Head of caudate nucleus (tissue), 42 donors: ENCODE measurements at regions of chr11 and their contacts with region 1.

Region 1: GRCh38 chr11:131465746-131466145 is 95.3 kb downstream of the NTM start:
- DNase-seq: peak in 1 of 42 donors; percentile 60

Region 2: DNA sequence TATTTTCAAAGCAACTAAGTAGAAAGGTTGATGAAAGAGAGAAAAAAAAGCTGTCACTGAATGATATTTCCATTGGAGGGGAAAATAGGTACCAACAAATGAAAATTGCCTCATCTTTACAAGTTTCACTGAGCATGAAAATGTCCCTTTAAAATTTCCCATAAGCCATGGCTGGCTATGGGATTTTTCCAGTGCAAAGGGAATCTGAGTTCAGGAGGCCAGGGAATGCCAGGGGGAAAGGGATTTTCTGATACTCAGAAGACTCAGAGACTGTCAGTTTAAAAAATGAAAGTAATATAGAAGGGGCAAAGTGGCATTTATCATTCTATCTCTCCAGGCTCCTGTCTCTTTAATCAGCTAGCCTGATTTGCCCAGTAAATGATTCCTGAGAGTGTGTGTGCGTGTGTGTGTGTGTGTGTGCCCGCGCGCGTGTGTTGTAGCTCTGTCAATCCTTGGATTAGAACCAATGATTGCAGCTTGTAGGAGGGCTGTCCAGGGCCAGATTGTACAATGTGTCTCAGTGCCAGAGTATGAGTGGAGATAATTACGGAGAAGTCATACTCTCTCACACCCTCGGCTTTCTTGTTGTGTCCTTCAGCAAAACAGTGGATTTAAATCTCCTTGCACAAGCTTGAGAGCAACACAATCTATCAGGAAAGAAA is 95.5 kb before region 1 on chr11 and contains the start of gene NTM:
- intact Hi-C with region 1: loop called (anchors 10 kb)
- DNase-seq: peak; percentile 59 to 95 (median 82)

Region 3: DNA sequence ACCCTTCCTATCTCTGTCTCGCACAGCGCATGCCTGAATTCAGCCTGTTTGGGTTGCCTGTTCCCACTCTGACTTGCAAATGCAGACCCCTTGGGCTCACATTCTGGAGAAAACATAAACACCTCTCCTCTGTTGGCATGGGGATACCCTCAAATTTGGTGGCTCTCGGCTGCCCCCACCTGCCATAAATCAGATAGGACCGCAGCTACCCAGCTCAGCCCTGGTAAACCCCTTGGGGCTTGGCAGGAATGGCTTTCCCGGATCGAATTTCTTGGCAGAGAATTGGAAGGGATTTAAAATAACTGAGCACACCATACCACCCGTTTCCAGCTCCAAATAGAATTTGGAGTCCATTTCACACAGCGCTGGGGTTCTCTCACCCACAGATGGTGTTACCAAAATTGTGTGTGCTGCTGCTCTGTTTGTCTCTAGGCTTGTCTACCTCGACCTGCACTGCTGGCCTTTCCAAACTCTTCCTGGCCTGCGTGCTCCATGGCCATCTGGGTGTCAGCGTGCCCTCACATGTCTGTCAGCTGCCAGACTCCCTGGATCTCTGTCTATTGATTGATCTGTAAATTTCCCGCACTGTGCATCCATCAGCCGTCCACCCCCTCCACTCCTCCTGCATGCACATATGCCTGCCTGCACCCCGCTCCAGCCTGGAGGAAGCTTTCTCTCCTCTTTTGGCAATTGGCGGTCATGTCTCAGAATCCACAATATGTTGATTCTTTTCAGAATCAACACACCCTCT is 38.6 kb after region 1 on chr11:
- intact Hi-C with region 1: no loop called
- DNase-seq: peak; percentile 36 to 89 (median 74)

Region 4: DNA sequence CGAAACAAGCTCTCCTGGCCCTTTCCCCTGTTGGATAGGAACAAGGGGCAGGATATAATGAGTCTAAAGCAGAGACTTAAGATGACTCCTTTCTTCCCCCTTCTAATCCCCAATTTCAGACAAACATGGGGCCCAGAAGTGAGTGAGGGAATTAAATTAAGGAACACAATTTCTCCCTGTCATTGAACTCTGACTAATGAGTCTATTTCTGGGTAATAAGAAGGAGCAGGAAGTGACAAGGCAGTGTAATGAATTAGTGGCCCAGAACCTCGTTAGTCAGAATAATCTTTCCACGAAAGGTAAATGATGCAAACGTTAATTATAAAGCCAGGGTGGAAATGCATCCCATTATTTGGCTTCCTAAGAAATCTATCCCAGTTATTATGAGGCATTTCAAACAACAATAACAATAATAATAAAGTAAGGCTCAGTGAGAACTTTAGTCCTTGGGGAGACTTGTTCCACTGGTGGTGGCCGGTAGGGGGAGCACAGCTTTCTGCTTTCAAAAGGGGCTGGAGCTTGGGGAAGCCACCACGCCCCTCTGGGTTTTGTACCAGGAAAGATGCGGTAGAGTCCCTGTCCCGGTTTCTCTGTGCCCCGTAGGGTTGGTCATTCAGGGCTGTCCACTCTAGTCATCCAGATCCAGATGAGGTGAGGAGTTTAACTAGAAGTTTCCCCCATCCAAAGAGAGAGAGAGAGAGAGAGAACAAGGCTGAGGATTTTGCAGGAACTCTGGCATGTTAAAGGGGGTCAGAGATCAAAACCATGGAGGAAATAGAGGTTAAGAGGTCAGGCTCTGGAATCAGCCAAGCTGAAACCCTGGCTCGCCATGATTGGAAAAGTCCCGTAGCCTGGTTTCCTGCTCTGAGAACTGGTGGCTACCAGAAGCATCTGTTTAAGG is 203.0 kb after region 1 on chr11:
- intact Hi-C with region 1: no loop called
- DNase-seq: peak; percentile 42 to 93 (median 74)

Region 5: GRCh38 chr11:131770801-131771200 is 305.1 kb after region 1 on chr11:
- intact Hi-C with region 1: no loop called
- DNase-seq: no peak